ENCODE measurements at regions of chr9 and their contacts with region 1.

Region 1: GRCh38 chr9:33816327-33817252 is at the start of gene UBE2R2:
- DNase-seq: peak; percentile 92 to 96 (median 94)
- H3K4me3 ChIP-seq: peak within 1 kb of the TSS; percentile 64 to 94
- H3K4me3 Mint-ChIP-seq: peak within 1 kb of the TSS; percentile 91 to 99 (median 96)
- H3K27ac ChIP-seq: peak within 1 kb of the TSS; percentile 89
- H3K27ac Mint-ChIP-seq: peak within 1 kb of the TSS; percentile 96 to 99 (median 98)
- H3K4me1 ChIP-seq: peaks cover 39% of the 10 kb centered on the region
- H3K4me1 Mint-ChIP-seq: peaks cover 30 to 59% (median 44%) of the 10 kb centered on the region in 4 donors
- H3K27me3 ChIP-seq: no peaks in the 10 kb centered on the region
- H3K27me3 Mint-ChIP-seq: no peaks in the 10 kb centered on the region
- total RNA-seq, gene UBE2R2: 31.0 to 31.4 TPM

Region 2: GRCh38 chr9:33264473-33265177 is 552.0 kb before region 1 on chr9 and contains the starts of genes BAG1 and CHMP5:
- CTCF ChIA-PET with region 1: no interaction called
- POLR2A ChIA-PET with region 1: interaction called, 3 read pairs
- intact Hi-C with region 1: loop called (anchors 10 kb)
- DNase-seq: peak; percentile 99 to 100 (median 100)
- H3K4me3 ChIP-seq: peak within 1 kb of the TSS; percentile 71 to 85
- H3K4me3 Mint-ChIP-seq: peak within 1 kb of the TSS; percentile 95 to 100 (median 97)
- H3K27ac ChIP-seq: peak within 1 kb of the TSS; percentile 76
- H3K27ac Mint-ChIP-seq: peak within 1 kb of the TSS; percentile 90 to 99 (median 98)
- H3K4me1 ChIP-seq: peaks cover 38% of the 10 kb centered on the region
- H3K4me1 Mint-ChIP-seq: peaks cover 38 to 53% (median 44%) of the 10 kb centered on the region in 4 donors
- H3K27me3 ChIP-seq: no peaks in the 10 kb centered on the region
- H3K27me3 Mint-ChIP-seq: no peaks in the 10 kb centered on the region
- total RNA-seq, gene BAG1: 53.5 to 56.3 TPM
- total RNA-seq, gene CHMP5: 32.3 to 35.0 TPM

Region 3: DNA sequence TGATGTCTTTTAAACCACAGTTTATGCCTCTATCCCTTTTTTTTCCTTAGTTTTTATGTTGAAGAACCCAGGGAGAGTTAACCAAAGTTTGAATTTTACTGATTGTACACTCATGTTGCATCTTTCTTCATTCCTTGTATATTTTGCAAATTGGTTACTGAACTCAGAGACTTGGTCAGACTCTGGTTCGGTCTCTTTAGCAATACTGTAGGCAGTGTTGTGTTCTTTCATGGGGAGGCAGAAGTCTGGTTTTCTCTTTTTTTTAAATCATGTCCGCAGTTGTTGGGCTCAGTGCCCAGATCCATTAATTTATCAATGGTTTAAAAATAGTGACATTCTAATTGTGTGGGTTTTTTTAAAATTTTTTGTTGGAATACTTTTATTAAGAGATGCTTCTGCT is 23.8 kb after region 1 on chr9:
- CTCF ChIA-PET with region 1: interaction called, 318 read pairs
- POLR2A ChIA-PET with region 1: interaction called, 4 read pairs
- intact Hi-C with region 1: no loop called
- DNase-seq: no peak
- H3K4me3 ChIP-seq: no peak overlapping the region
- H3K4me3 Mint-ChIP-seq: no peak overlapping the region
- H3K27ac ChIP-seq: no peak overlapping the region
- H3K27ac Mint-ChIP-seq: peak overlapping the region in 4 of 7 donors; percentile 5 to 58 (median 53)
- H3K4me1 ChIP-seq: peaks cover 22% of the 10 kb centered on the region
- H3K4me1 Mint-ChIP-seq: peaks cover 27 to 60% (median 44%) of the 10 kb centered on the region in 4 donors
- H3K27me3 ChIP-seq: no peaks in the 10 kb centered on the region
- H3K27me3 Mint-ChIP-seq: no peaks in the 10 kb centered on the region

Region 4: GRCh38 chr9:33924978-33925797 is 108.6 kb after region 1 on chr9:
- CTCF ChIA-PET with region 1: interaction called, 15 read pairs
- POLR2A ChIA-PET with region 1: no interaction called
- intact Hi-C with region 1: loop called (anchors 1 kb)
- DNase-seq: peak in 4 of 5 donors; percentile 11 to 23 (median 18)
- H3K4me3 ChIP-seq: no peak overlapping the region
- H3K4me3 Mint-ChIP-seq: no peak overlapping the region
- H3K27ac ChIP-seq: no peak overlapping the region
- H3K27ac Mint-ChIP-seq: peak overlapping the region in 4 of 7 donors; percentile 18 to 68 (median 50)
- H3K4me1 ChIP-seq: no peaks in the 10 kb centered on the region
- H3K4me1 Mint-ChIP-seq: peaks cover 0 to 5% (median 0%) of the 10 kb centered on the region in 4 donors
- H3K27me3 ChIP-seq: no peaks in the 10 kb centered on the region
- H3K27me3 Mint-ChIP-seq: no peaks in the 10 kb centered on the region

Region 5: DNA sequence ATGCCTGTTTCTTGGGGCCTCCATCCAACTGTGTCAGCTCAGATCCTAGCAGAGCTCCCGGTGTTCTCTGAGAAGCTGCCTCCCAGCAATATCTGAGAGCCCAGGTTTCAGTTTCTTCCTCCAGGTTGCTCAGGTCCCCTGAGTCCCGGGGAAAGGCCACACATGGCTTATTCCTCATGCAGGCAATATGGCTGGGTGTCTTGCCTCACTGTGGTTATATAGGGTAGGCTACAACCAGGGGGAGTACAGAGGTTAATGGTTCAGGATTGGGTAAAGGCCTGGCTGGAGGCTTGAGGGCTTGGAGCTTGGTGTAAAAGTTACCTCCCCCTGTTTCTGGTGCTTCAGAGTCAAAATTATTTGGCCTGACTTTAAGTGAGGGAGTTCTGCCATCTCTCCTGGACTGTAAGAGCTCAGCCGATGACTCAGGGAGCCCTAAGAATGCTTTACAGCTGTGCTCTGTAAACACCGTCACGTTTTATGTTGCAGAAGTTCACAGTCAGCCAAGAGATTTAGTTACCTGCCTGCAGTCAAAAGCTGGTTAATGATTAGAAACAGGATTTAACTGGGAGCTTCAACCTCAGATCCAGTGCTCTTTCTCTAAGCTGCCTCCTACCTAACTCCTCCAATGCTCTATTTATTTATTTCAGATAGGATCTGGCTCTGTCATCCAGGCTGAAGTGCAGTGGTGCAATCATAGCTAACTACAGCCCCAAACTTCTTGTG is 256.4 kb after region 1 on chr9:
- CTCF ChIA-PET with region 1: interaction called, 51 read pairs
- POLR2A ChIA-PET with region 1: no interaction called
- intact Hi-C with region 1: loop called (anchors 1 kb)
- DNase-seq: no peak
- H3K4me3 ChIP-seq: no peak overlapping the region
- H3K4me3 Mint-ChIP-seq: no peak overlapping the region
- H3K27ac ChIP-seq: no peak overlapping the region
- H3K27ac Mint-ChIP-seq: peak overlapping the region in 3 of 7 donors; percentile 37 to 89 (median 67)
- H3K4me1 ChIP-seq: no peaks in the 10 kb centered on the region
- H3K4me1 Mint-ChIP-seq: peaks cover 0 to 3% (median 2%) of the 10 kb centered on the region in 4 donors
- H3K27me3 ChIP-seq: no peaks in the 10 kb centered on the region
- H3K27me3 Mint-ChIP-seq: no peaks in the 10 kb centered on the region

Region 6: DNA sequence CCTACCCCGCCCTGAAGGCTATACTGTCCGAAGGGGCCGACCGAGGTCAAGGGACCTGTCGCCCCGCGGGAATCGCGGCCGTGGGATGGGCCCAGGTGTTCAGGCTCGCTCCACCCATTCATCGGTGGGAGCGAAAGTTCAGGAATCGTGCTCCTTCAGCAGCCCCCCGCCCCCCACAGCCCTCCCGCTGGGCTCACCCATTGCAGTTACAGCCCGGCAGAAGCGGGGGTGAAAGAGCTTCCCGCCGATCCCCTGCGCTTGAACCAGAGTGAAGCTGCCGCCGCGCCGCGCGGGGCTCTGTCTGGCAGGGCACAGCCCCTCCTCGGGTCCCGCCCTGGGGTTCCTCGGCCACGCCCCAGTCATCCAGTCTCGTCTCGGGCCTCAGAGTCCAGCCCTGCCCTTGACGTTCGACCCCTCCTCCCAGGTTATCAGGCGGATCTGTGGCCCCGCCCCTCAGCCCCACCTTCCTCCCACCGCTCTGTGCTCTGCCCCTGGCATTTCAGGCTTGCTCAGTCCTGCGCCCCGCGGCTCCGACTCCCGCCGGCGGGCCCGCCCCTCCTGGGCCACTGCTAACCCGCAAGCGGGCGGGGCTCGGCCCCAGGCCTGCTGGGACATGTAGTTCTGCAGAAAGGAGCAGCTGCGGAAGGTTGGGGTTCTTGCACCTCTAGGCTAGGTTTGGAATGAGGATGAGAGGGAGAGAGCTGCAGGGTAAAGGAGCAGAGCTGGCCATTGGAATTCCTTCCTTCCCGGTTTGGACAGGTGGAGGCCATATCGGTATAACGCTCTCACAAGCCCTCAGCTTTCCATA is 560.2 kb after region 1 on chr9 and contains the start of gene MYORG:
- CTCF ChIA-PET with region 1: interaction called, 4 read pairs
- POLR2A ChIA-PET with region 1: no interaction called
- intact Hi-C with region 1: loop called (anchors 2 kb)
- DNase-seq: peak; percentile 94 to 98 (median 96)
- H3K4me3 ChIP-seq: peak within 1 kb of the TSS; percentile 70 to 77
- H3K4me3 Mint-ChIP-seq: peak within 1 kb of the TSS; percentile 92 to 98 (median 94)
- H3K27ac ChIP-seq: peak within 1 kb of the TSS; percentile 49
- H3K27ac Mint-ChIP-seq: peak within 1 kb of the TSS; percentile 58 to 97 (median 93)
- H3K4me1 ChIP-seq: peaks cover 39% of the 10 kb centered on the region
- H3K4me1 Mint-ChIP-seq: peaks cover 33 to 54% (median 44%) of the 10 kb centered on the region in 4 donors
- H3K27me3 ChIP-seq: no peaks in the 10 kb centered on the region
- H3K27me3 Mint-ChIP-seq: no peaks in the 10 kb centered on the region
- total RNA-seq, gene MYORG: 1.3 to 1.4 TPM

Region 7: GRCh38 chr9:34611829-34612630 is 795.4 kb after region 1 on chr9 and contains the start of gene RPP25L:
- CTCF ChIA-PET with region 1: no interaction called
- POLR2A ChIA-PET with region 1: no interaction called
- intact Hi-C with region 1: loop called (anchors 5 kb)
- DNase-seq: peak; percentile 83 to 89 (median 86)
- H3K4me3 ChIP-seq: peak within 1 kb of the TSS; percentile 81 to 88
- H3K4me3 Mint-ChIP-seq: peak within 1 kb of the TSS; percentile 87 to 99 (median 92)
- H3K27ac ChIP-seq: peak within 1 kb of the TSS; percentile 71
- H3K27ac Mint-ChIP-seq: peak within 1 kb of the TSS; percentile 83 to 97 (median 96)
- H3K4me1 ChIP-seq: peaks cover 19% of the 10 kb centered on the region
- H3K4me1 Mint-ChIP-seq: peaks cover 7 to 35% (median 25%) of the 10 kb centered on the region in 4 donors
- H3K27me3 ChIP-seq: no peaks in the 10 kb centered on the region
- H3K27me3 Mint-ChIP-seq: no peaks in the 10 kb centered on the region
- total RNA-seq, gene RPP25L: 28.5 to 28.9 TPM

Measured in CD4-positive, alpha-beta memory T cell (primary cell).